ENCODE measurements at regions of chr19 and their contacts with region 1.

Region 1: DNA sequence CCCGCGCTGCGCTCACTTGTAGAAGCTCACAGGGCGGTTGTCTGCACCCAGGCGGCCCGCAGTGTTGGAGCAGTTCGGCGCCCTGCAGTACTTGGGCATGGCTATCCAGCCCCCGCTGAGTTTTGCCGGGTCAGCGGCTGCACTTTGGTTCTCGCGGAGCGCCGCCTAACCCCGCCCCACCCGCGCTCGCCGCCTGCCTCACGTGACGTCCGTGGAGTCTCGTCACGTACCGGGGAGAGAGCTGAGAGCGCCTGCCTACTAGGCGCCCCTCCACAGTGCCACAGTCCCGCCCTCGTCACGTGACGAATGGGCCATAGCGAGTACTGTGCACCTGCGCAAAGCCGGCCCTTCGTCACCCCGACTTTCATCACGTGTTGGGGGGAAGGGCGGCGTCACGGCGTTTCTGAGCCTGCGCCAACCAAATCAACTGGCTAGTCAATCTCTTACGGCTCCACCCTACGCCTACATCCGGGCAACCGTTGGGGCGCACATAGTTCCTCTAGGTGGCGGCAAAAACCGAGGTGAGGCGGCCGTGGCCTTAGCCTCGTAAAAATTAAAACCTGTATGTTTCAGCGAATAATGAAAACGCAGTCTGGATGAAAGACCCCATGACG is at the start of gene THAP8:
- DNase-seq: peak; percentile 100
- H3K4me3 ChIP-seq: peak within 1 kb of the TSS; percentile 76 to 89 (median 87)
- H3K27ac ChIP-seq: peak within 1 kb of the TSS; percentile 79
- H3K4me1 ChIP-seq: peaks cover 16% of the 10 kb centered on the region
- H3K27me3 ChIP-seq: no peaks in the 10 kb centered on the region
- CTCF ChIP-seq: peak; percentile 31 to 45
- POLR2A ChIP-seq: no peak
- total RNA-seq, gene THAP8: 2.9 and 4.1 TPM in 2 replicates

Region 2: DNA sequence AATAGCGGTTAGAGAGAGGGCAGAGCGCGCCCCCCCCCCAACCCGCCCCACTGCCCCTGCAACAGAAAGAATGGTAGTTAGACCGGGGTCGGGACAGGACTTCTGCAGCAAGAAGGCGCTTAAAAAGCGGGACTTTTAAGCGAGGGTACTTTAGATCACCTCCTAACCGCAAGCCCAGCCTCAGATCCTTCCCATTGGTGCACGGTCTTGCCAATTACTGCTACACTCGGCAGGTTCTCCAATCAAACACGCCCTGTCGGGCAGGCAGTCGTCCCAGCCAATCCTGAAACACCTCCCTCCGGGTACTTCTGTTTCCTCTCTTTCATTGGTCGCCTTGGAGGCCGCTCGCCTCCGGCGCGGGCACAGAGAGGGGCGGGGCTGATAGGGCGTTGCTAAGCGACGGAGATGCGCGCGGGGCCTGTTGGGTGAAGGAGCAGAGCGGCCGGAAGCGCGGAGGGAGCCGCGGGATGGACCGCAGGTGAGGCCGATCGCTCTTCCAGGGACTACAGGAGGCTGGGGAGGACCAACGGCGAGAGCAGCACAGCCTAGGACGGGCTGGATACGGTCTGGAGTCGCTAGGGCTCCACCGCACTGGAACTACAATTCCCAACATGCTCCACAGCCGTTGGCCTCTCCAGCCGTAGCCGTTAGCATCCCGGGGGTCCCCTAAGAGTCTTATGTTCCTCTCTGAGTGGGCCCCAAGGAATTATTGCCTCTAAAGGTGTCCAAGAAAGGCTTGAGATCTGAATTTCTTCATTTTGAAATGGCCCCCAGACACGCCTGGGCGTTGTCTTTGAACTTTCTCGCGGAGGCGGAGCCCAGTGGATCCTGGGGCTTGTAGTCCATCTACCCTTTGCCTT is 296.2 kb before region 1 on chr19 and contains the start of gene PROSER3:
- CTCF ChIA-PET with region 1: no interaction called
- POLR2A ChIA-PET with region 1: no interaction called
- dilution Hi-C with region 1: no loop called
- intact Hi-C with region 1: loop called (anchors 1 kb)
- DNase-seq: peak; percentile 99
- H3K4me3 ChIP-seq: peak within 1 kb of the TSS; percentile 59 to 89 (median 82)
- H3K27ac ChIP-seq: peak within 1 kb of the TSS; percentile 84
- H3K4me1 ChIP-seq: peaks cover 22% of the 10 kb centered on the region
- H3K27me3 ChIP-seq: no peaks in the 10 kb centered on the region
- CTCF ChIP-seq: no peak
- POLR2A ChIP-seq: peak; percentile 29
- total RNA-seq, gene PROSER3: 28.3 and 32.1 TPM in 2 replicates

Region 3: DNA sequence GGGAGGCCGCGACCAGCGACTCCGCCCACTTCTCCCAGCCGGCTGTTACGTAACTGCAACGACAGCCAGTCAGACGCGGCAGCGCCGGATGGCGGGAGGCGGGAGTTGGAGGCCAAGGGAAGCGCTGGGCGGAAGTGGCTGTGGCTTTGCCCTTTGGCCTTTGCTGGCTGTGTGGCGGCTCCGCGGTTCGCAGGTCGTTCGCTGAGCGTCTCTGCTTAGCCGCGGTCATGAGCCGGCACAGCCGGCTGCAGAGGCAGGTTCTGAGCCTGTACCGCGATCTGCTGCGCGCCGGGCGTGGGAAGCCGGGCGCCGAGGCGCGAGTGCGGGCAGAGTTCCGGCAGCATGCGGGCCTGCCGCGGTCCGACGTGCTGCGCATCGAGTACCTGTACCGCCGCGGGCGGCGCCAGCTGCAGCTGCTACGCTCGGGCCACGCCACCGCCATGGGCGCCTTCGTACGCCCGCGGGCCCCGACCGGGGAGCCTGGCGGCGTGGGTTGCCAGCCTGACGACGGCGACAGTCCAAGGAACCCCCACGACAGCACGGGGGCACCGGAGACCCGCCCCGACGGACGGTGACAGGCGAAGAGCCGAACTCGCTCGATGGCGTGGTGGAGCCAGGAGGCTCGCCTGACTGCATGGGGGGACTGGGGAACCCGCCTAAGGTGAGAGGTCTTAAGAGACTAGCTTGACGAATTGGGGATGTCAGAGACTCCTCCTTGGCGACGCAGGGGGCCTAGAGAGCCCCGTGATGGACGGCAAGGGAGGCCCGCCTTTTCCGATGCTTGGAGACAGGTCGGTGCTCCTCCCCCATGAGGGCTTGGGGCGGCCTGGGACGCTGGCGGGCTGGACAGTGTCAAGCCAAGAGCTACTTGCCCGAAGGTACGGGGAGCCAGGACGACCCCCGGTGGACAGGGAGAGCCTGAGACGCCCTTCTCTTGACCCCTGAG is 58.9 kb before region 1 on chr19 and contains the start of gene SDHAF1:
- CTCF ChIA-PET with region 1: interaction called, 6 read pairs
- POLR2A ChIA-PET with region 1: no interaction called
- dilution Hi-C with region 1: no loop called
- intact Hi-C with region 1: loop called (anchors 1 kb)
- DNase-seq: peak; percentile 92
- H3K4me3 ChIP-seq: peak within 1 kb of the TSS; percentile 62 to 75 (median 64)
- H3K27ac ChIP-seq: peak within 1 kb of the TSS; percentile 47
- H3K4me1 ChIP-seq: peaks cover 10% of the 10 kb centered on the region
- H3K27me3 ChIP-seq: no peaks in the 10 kb centered on the region
- CTCF ChIP-seq: no peak
- POLR2A ChIP-seq: peak; percentile 90
- total RNA-seq, gene SDHAF1: 8.4 and 10.3 TPM in 2 replicates

Region 4: GRCh38 chr19:36014029-36014924 is 39.9 kb before region 1 on chr19 and contains the start of gene ALKBH6:
- CTCF ChIA-PET with region 1: interaction called, 5 read pairs
- POLR2A ChIA-PET with region 1: interaction called, 3 read pairs
- dilution Hi-C with region 1: no loop called
- intact Hi-C with region 1: loop called (anchors 1 kb)
- DNase-seq: peak; percentile 99
- H3K4me3 ChIP-seq: peak within 1 kb of the TSS; percentile 69 to 96 (median 91)
- H3K27ac ChIP-seq: peak within 1 kb of the TSS; percentile 65
- H3K4me1 ChIP-seq: peaks cover 14% of the 10 kb centered on the region
- H3K27me3 ChIP-seq: no peaks in the 10 kb centered on the region
- CTCF ChIP-seq: no peak
- POLR2A ChIP-seq: peak; percentile 23
- total RNA-seq, gene ALKBH6: 17.3 and 21.4 TPM in 2 replicates

Region 5: DNA sequence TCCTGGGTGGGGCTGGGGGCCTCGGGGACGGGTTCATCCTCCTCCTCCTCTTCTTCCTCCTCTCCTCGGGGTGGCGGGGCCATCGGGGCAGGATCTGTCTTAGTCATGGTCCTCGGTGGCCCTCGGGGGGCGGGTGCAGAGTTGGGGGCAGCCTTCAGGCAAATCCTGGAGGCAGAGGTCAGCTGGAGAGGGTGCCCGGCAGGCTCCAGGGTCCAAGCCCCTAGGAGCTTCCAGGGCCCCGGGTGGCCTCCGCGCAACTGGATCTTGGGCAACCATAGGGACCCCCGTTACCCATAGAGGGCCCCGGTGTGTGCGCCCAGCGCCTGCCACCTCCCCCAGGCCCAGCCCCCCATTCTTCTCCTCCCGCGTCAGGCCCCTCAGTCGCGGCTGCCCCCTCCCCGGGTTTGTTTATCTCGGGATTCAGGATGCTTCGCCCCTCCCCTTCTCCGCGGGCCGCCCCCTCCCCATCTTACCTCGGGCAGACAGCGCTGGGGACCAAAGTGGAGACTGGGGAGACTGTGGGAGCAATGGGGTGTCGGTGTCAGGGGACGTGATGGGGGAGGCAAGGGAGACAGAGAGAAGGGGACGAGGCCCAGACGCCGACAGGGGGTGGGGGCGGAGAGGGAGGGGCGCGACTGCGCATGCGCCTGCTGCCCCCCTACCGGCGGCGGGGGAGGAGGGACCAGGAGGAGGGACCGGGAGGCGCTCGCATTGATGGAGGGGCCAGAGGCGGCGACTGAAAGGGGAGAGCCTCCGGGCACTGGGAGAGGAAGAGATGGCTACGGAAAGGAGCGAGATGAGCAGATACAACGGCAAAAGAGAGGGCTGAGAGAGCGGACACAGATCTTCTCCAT is 21.7 kb before region 1 on chr19 and contains the start of gene CLIP3:
- CTCF ChIA-PET with region 1: interaction called, 5 read pairs
- POLR2A ChIA-PET with region 1: interaction called, 4 read pairs
- dilution Hi-C with region 1: no loop called
- intact Hi-C with region 1: loop called (anchors 1 kb)
- DNase-seq: peak; percentile 64
- H3K4me3 ChIP-seq: peak within 1 kb of the TSS; percentile 63 to 88 (median 74)
- H3K27ac ChIP-seq: no peak within 1 kb of the TSS
- H3K4me1 ChIP-seq: peaks cover 6% of the 10 kb centered on the region
- H3K27me3 ChIP-seq: no peaks in the 10 kb centered on the region
- CTCF ChIP-seq: no peak
- POLR2A ChIP-seq: no peak
- total RNA-seq, gene CLIP3: 21.0 and 24.4 TPM in 2 replicates

Region 6: GRCh38 chr19:36114763-36115452 is 60.7 kb after region 1 on chr19 and contains the start of gene POLR2I:
- CTCF ChIA-PET with region 1: interaction called, 5 read pairs
- POLR2A ChIA-PET with region 1: no interaction called
- dilution Hi-C with region 1: no loop called
- intact Hi-C with region 1: loop called (anchors 1 kb)
- DNase-seq: peak; percentile 100
- H3K4me3 ChIP-seq: peak within 1 kb of the TSS; percentile 68 to 81 (median 79)
- H3K27ac ChIP-seq: peak within 1 kb of the TSS; percentile 68
- H3K4me1 ChIP-seq: peaks cover 15% of the 10 kb centered on the region
- H3K27me3 ChIP-seq: no peaks in the 10 kb centered on the region
- CTCF ChIP-seq: no peak
- POLR2A ChIP-seq: peak; percentile 59
- total RNA-seq, gene POLR2I: 63.3 and 64.8 TPM in 2 replicates

Region 7: GRCh38 chr19:36139473-36140303 is 85.5 kb after region 1 on chr19 and contains the start of gene CAPNS1:
- CTCF ChIA-PET with region 1: no interaction called
- POLR2A ChIA-PET with region 1: no interaction called
- dilution Hi-C with region 1: no loop called
- intact Hi-C with region 1: loop called (anchors 1 kb)
- DNase-seq: peak; percentile 97
- H3K4me3 ChIP-seq: peak within 1 kb of the TSS; percentile 89 to 97 (median 91)
- H3K27ac ChIP-seq: peak within 1 kb of the TSS; percentile 91
- H3K4me1 ChIP-seq: peaks cover 20% of the 10 kb centered on the region
- H3K27me3 ChIP-seq: no peaks in the 10 kb centered on the region
- CTCF ChIP-seq: no peak
- POLR2A ChIP-seq: peak; percentile 96
- total RNA-seq, gene CAPNS1: 722 and 777 TPM in 2 replicates

Measured in endothelial cell of umbilical vein (primary cell).